ENCODE measurements at regions of chr22 and their contacts with region 1.

Region 1: DNA sequence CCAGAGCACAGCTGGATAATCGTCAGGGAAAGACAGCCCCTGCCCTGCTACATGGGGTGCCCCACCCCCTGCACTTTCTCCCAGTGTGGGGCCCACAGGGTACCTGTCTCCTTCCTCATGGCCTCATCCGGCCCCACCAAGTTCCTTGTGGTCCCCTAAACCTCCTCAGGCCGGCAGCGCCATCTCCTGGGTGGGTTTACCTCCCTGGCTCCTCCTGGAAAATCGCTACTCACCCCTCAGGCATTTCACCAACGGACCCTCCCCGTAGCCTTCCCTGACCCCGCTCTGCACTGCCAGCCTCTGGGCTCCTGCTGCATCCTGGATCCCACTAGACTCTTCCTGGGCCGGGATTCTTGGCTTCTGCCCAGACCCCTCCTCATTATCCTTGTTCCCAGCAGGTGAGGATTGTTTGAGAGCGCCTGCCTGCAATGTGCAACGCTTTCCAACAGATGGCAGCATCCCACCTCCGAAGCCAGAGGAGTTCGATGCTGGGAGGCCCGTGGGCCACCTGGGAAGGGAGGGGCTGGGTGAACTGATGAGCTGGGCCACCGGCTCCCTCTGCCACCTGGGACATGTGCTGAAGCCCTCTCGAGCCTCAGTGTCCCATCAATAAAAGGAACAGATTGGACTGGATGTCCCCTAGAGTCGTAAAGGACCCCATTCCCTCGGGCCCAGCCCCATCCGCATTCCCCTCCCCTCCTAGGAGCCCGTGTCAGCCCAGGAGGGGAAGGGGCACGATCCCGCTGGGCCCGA is 44.2 kb upstream of the TTLL12 start:
- DNase-seq: peak; percentile 85
- CTCF ChIP-seq: peak; percentile 90

Region 2: GRCh38 chr22:43216738-43217137 is 14.4 kb before region 1 on chr22:
- CTCF ChIA-PET with region 1: no interaction called
- POLR2A ChIA-PET with region 1: no interaction called
- DNase-seq: no peak
- CTCF ChIP-seq: no peak

Region 3: GRCh38 chr22:43330178-43331068 is 99.3 kb after region 1 on chr22:
- CTCF ChIA-PET with region 1: interaction called, 10 read pairs
- POLR2A ChIA-PET with region 1: no interaction called
- DNase-seq: no peak
- CTCF ChIP-seq: no peak

Region 4: GRCh38 chr22:43385770-43386641 is 154.9 kb after region 1 on chr22:
- CTCF ChIA-PET with region 1: interaction called, 10 read pairs
- POLR2A ChIA-PET with region 1: no interaction called
- DNase-seq: peak; percentile 89
- CTCF ChIP-seq: peak; percentile 94